Gastrocnemius medialis (tissue), 4 donors: ENCODE measurements at regions of chr1 and their contacts with region 1.

Region 1: GRCh38 chr1:202306535-202307345 is 35.0 kb downstream of the UBE2T start:
- DNase-seq: no peak
- ATAC-seq: no peak
- H3K4me3 ChIP-seq: no peak overlapping the region
- H3K27ac ChIP-seq: no peak overlapping the region
- H3K4me1 ChIP-seq: peaks cover 3 to 13% of the 10 kb centered on the region in 2 donors
- H3K27me3 ChIP-seq: no peaks in the 10 kb centered on the region
- CTCF ChIP-seq: no peak
- POLR2A ChIP-seq: no peak

Region 2: GRCh38 chr1:202154766-202155477 is 151.8 kb before region 1 on chr1:
- in situ Hi-C with region 1: no loop called
- intact Hi-C with region 1: no loop called
- DNase-seq: peak; percentile 31 to 44
- ATAC-seq: peak; percentile 86 to 88
- H3K4me3 ChIP-seq: no peak overlapping the region
- H3K27ac ChIP-seq: no peak overlapping the region
- H3K4me1 ChIP-seq: no peaks in the 10 kb centered on the region
- H3K27me3 ChIP-seq: no peaks in the 10 kb centered on the region
- CTCF ChIP-seq: peak in 3 of 5 experiments; percentile 28 to 46 (median 31)
- POLR2A ChIP-seq: no peak

Region 3: DNA sequence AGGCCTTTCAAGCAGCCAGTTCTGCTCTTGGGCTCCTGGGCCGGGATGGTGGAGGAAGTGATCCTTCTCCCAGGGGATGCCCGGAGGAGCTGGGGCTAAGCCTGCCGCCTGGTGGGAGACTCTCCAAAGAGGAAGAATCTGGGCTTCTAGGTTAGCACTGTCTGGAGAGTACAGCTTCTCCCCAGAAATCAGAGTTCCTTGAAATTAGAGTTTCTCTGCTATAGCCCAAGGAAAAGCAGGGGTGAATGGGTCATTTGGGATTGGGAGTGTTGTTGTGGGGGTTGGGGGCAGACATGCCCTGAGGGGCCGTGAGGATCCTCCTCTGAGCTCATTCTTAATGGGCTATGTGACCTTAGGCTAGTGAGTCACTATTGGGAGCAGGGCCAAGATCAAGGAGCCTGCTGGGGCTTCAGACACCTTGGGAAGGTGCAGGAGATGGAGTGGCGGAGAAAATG is 106.6 kb before region 1 on chr1:
- in situ Hi-C with region 1: loop called (anchors 5 to 10 kb)
- intact Hi-C with region 1: loop called (anchors 5 kb)
- DNase-seq: peak in 1 of 2 donors; percentile 29
- ATAC-seq: peak in 1 of 2 donors; percentile 47
- H3K4me3 ChIP-seq: no peak overlapping the region
- H3K27ac ChIP-seq: peak overlapping the region in 1 of 4 donors; percentile 30
- H3K4me1 ChIP-seq: peaks cover 27 to 31% of the 10 kb centered on the region in 2 donors
- H3K27me3 ChIP-seq: no peaks in the 10 kb centered on the region
- CTCF ChIP-seq: no peak
- POLR2A ChIP-seq: no peak

Region 4: GRCh38 chr1:202680586-202681352 is 374.0 kb after region 1 on chr1:
- in situ Hi-C with region 1: no loop called
- intact Hi-C with region 1: no loop called
- DNase-seq: no peak
- ATAC-seq: no peak
- H3K4me3 ChIP-seq: no peak overlapping the region
- H3K27ac ChIP-seq: no peak overlapping the region
- H3K4me1 ChIP-seq: no peaks in the 10 kb centered on the region
- H3K27me3 ChIP-seq: peaks cover 3 to 23% (median 13%) of the 10 kb centered on the region in 3 donors
- CTCF ChIP-seq: no peak
- POLR2A ChIP-seq: no peak